ENCODE measurements at regions of chr6 and their contacts with region 1.

Region 1: GRCh38 chr6:56757588-56757984 is 114.9 kb upstream of the DST start:
- DNase-seq: no peak
- H3K4me3 ChIP-seq: no peak overlapping the region
- H3K27ac ChIP-seq: peak overlapping the region; percentile 58
- H3K27me3 ChIP-seq: no peaks in the 10 kb centered on the region
- CTCF ChIP-seq: peak; percentile 56

Region 2: DNA sequence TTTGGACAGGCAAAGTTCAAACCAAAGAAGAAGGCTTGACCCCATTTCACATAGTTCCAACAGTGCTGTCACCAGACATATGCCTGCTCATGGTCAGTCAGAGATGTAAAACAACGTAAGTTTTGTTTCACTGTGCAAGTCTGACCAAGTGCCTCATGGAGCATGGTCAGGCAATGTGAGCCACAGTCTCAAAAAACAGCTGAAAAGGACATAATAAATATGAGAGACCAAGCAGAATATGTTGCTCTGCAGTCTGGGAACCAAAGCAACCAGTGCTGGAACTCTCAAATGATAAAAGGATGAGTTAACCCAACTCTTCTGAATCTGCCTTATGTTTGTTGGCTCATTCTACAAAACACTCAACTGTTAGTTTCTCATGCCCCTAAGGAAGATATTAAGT is 75.0 kb before region 1 on chr6:
- CTCF ChIA-PET with region 1: no interaction called
- POLR2A ChIA-PET with region 1: no interaction called
- DNase-seq: no peak
- H3K4me3 ChIP-seq: no peak overlapping the region
- H3K27ac ChIP-seq: no peak overlapping the region
- H3K27me3 ChIP-seq: no peaks in the 10 kb centered on the region
- CTCF ChIP-seq: no peak

Region 3: GRCh38 chr6:56693246-56693607 is 64.4 kb before region 1 on chr6:
- CTCF ChIA-PET with region 1: interaction called, 11 read pairs
- POLR2A ChIA-PET with region 1: no interaction called
- DNase-seq: no peak
- H3K4me3 ChIP-seq: peak overlapping the region; percentile 29; the same call in 1 of the 2 replicates
- H3K27ac ChIP-seq: peak overlapping the region; percentile 93
- H3K27me3 ChIP-seq: no peaks in the 10 kb centered on the region
- CTCF ChIP-seq: no peak

Region 4: DNA sequence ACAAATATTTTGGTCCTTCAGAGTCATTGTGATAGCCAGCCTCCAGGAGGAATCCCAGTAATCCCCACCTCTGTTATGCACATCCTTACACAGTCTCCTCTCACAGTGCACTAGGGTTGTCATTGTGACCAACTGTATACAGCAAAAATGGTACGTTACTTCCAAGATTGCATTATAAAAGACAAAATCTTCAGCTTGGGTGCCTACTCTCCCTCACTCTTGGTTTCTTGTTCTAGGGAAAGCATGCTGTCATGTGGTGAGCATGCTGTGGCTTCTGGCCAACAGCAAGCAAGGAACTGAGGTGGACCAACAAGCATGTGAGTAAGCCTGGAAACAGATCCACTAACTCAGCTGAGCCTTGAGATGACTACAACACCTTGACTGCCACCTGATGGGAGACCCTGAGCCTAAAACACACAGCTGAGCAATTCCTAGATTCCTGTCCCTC is 15.2 kb after region 1 on chr6:
- CTCF ChIA-PET with region 1: no interaction called
- POLR2A ChIA-PET with region 1: no interaction called
- DNase-seq: peak; percentile 78
- H3K4me3 ChIP-seq: no peak overlapping the region
- H3K27ac ChIP-seq: no peak overlapping the region
- H3K27me3 ChIP-seq: no peaks in the 10 kb centered on the region
- CTCF ChIP-seq: no peak